Psoas muscle (tissue), 8 donors: ENCODE measurements at regions of chr17 and their contacts with region 1.

Region 1: DNA sequence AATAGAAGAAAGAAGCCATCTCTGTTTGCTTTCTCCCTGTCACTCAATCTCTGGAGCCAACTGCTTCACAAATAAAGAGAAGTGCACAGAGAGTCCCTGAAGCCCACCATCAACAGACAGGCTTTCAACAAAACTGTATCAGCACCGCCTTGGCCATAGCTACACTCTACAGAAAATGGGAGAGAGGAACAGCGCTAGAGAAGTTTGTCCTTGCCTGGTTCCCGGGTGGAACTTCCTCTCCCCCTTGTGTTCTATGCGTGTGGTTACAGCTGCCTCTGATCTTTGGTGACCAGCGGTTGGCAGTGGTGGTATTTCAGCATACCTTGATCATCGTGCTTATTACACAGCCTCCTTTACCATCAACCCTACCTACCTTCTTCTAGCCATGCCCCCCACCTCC is 91.4 kb upstream of the CCL2 start:
- DNase-seq: no peak
- ATAC-seq: peak in 3 of 4 donors; percentile 35 to 52 (median 48)
- H3K4me3 ChIP-seq: no peak overlapping the region
- H3K27ac ChIP-seq: no peak overlapping the region
- H3K4me1 ChIP-seq: peaks cover 12% of the 10 kb centered on the region
- H3K27me3 ChIP-seq: peaks cover 0 to 7% (median 0%) of the 10 kb centered on the region in 3 donors
- CTCF ChIP-seq: peak; percentile 49

Region 2: DNA sequence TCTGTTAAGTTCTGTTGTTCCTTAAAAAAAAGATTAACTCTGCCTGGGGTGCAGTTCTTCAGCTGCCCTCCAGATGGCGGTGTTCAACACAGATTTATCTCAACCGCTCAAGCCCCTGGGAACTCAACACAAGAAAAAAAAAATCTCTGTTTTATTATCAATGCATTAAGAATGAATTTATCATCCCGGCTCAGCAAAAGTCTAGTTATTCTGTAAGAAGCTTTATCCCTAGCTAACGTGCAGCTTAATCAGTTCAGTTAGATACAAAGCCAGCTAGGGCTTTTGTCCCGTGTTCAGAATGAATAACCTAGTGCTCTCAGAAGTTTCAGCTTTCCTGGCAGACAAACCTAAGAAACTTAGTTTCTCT is 384.4 kb before region 1 on chr17:
- intact Hi-C with region 1: loop called in 1 of 2 experiments (anchors 2 kb)
- DNase-seq: peak in 1 of 2 donors; percentile 21
- ATAC-seq: peak in 1 of 4 donors; percentile 54
- H3K4me3 ChIP-seq: no peak overlapping the region
- H3K27ac ChIP-seq: no peak overlapping the region
- H3K4me1 ChIP-seq: no peaks in the 10 kb centered on the region
- H3K27me3 ChIP-seq: peaks cover 0 to 3% (median 0%) of the 10 kb centered on the region in 3 donors
- CTCF ChIP-seq: peak; percentile 88

Region 3: DNA sequence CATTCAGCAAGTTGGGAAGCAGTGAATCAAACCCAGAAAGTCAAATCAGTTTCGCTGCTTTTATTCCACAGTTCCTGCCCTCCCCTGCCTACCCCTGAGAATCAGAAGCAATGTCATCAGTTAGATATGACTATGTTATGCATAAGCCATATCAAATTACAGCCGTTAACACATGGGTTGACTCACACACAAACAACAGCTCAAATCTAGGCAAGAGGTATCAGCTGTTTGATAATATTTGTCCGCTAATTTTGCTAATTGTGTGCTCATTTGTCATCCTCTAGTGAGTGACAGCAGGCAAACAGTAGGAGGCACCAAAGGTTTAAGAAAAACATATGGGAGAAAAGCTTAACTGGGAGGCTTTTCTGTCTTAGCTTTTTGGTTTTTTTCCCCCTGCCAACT is 235.9 kb before region 1 on chr17:
- intact Hi-C with region 1: loop called in 1 of 2 experiments (anchors 5 kb)
- DNase-seq: no peak
- ATAC-seq: no peak
- H3K4me3 ChIP-seq: no peak overlapping the region
- H3K27ac ChIP-seq: no peak overlapping the region
- H3K4me1 ChIP-seq: no peaks in the 10 kb centered on the region
- H3K27me3 ChIP-seq: peaks cover 0 to 6% (median 0%) of the 10 kb centered on the region in 3 donors
- CTCF ChIP-seq: no peak

Region 4: GRCh38 chr17:34220754-34221395 is 57.2 kb after region 1 on chr17:
- intact Hi-C with region 1: no loop called
- DNase-seq: no peak
- ATAC-seq: peak in 1 of 4 donors; percentile 52
- H3K4me3 ChIP-seq: no peak overlapping the region
- H3K27ac ChIP-seq: no peak overlapping the region
- H3K4me1 ChIP-seq: no peaks in the 10 kb centered on the region
- H3K27me3 ChIP-seq: peaks cover 0 to 1% (median 0%) of the 10 kb centered on the region in 3 donors
- CTCF ChIP-seq: no peak

Region 5: GRCh38 chr17:34354637-34355036 is 191.0 kb after region 1 on chr17:
- intact Hi-C with region 1: no loop called
- DNase-seq: no peak
- ATAC-seq: no peak
- H3K4me3 ChIP-seq: no peak overlapping the region
- H3K27ac ChIP-seq: no peak overlapping the region
- H3K4me1 ChIP-seq: no peaks in the 10 kb centered on the region
- H3K27me3 ChIP-seq: no peaks in the 10 kb centered on the region
- CTCF ChIP-seq: no peak